ENCODE measurements at regions of chr4 and their contacts with region 1.

Region 1: DNA sequence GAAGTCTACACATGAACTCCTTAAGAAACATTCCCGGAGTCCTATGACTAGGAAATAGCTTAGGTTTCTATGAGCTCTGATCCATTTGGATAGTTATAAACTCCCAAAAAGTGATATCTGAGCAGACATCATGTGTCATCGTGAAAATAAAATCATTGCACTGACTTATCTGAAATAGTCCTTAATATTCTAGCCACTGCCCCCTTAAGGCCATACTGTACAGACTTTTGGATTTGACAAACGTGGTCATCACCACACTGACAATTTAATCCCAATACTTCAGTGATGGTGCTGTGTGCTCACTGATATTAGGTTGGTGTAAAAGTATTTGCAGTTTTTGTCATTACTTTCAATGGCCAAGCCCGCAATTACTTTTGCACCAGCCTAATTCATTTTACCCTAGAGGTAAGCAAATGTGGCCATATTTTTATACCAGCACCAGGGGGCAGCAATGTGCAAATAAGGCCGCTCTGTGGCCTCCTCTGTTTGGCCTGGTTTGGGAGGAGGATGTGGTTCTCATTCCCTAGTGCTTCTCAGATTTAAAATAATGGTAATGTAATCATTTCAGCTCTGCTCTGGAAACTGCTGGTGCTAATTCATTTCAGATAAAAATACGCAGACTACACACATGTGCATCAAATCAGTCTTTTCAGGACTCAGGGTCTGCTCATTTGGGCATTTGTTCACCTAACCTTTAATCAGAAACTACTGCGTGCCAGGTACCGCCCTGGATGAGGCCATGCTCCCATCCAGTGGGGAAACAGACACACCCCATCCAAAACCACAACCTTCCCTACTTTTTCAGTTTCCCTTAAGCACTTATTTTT is 196.4 kb upstream of the C1QTNF7 start:
- DNase-seq: peak; percentile 66 to 70
- ATAC-seq: peak; percentile 60 to 84 (median 72)
- H3K4me3 ChIP-seq: no peak overlapping the region
- H3K27ac ChIP-seq: no peak overlapping the region
- H3K4me1 ChIP-seq: no peaks in the 10 kb centered on the region
- H3K27me3 ChIP-seq: no peaks in the 10 kb centered on the region
- CTCF ChIP-seq: peak; percentile 55

Region 2: GRCh38 chr4:15396157-15396800 is 164.8 kb after region 1 on chr4:
- intact Hi-C with region 1: loop called in 1 of 2 experiments (anchors 10 kb)
- DNase-seq: no peak
- ATAC-seq: peak in 2 of 4 donors; percentile 46 to 63
- H3K4me3 ChIP-seq: no peak overlapping the region
- H3K27ac ChIP-seq: no peak overlapping the region
- H3K4me1 ChIP-seq: no peaks in the 10 kb centered on the region
- H3K27me3 ChIP-seq: no peaks in the 10 kb centered on the region
- CTCF ChIP-seq: peak; percentile 39

Region 3: GRCh38 chr4:15457406-15458201 is 226.1 kb after region 1 on chr4:
- intact Hi-C with region 1: loop called in 1 of 2 experiments (anchors 10 kb)
- DNase-seq: no peak
- ATAC-seq: peak in 3 of 4 donors; percentile 64 to 75 (median 67)
- H3K4me3 ChIP-seq: no peak overlapping the region
- H3K27ac ChIP-seq: no peak overlapping the region
- H3K4me1 ChIP-seq: peaks cover 3% of the 10 kb centered on the region
- H3K27me3 ChIP-seq: no peaks in the 10 kb centered on the region
- CTCF ChIP-seq: peak; percentile 78

Region 4: DNA sequence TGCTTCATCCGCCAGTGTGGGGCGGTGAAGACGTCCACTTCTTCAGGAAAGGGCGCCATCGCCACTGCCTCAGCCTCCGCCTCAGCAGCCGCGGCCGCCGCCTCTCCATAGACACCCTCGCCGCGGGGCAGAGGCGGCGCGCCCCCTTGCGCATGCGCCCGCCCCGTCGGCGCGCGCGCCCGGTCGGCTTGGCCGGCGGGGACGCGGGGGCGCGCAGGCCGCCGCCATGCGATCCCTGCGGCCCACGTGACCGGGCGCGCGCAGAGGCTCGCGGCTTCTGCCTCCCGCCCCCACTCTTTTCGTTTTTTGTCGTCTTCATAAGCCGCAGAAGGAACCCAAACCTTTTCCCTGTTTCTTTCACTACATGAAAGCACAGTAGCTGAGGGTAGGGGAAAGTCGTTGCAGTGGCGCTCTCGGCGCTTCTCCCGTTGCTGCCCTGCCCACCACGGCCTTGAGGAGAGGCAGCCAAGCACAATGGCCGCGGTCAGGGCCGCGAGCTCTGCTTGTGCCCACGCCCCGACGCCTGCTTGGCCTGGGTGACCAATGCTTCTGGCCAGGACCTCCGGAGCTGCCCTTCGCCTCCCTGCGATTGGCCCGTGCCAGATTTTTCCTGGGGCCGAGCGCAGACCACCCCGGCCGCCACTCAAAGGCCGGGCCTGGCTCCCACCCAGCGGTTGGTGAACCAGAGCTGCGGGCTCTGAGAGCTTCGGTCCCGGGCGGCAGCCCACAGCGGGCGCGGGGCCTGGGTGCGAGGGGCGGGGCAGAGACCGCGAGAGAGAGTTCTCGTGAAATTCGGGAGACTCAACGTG is 424.0 kb after region 1 on chr4 and contains the start of gene FBXL5:
- intact Hi-C with region 1: loop called in 1 of 2 experiments (anchors 10 kb)
- DNase-seq: peak; percentile 84 to 90
- ATAC-seq: peak; percentile 93 to 94 (median 93)
- H3K4me3 ChIP-seq: peak within 1 kb of the TSS; percentile 83
- H3K27ac ChIP-seq: peak within 1 kb of the TSS; percentile 100
- H3K4me1 ChIP-seq: peaks cover 31% of the 10 kb centered on the region
- H3K27me3 ChIP-seq: no peaks in the 10 kb centered on the region
- CTCF ChIP-seq: no peak
- total RNA-seq, gene FBXL5: 53.9 to 91.2 (median 67.9) TPM